AG04449 (cell line): ENCODE measurements at regions of chr10 and their contacts with region 1.

Region 1: DNA sequence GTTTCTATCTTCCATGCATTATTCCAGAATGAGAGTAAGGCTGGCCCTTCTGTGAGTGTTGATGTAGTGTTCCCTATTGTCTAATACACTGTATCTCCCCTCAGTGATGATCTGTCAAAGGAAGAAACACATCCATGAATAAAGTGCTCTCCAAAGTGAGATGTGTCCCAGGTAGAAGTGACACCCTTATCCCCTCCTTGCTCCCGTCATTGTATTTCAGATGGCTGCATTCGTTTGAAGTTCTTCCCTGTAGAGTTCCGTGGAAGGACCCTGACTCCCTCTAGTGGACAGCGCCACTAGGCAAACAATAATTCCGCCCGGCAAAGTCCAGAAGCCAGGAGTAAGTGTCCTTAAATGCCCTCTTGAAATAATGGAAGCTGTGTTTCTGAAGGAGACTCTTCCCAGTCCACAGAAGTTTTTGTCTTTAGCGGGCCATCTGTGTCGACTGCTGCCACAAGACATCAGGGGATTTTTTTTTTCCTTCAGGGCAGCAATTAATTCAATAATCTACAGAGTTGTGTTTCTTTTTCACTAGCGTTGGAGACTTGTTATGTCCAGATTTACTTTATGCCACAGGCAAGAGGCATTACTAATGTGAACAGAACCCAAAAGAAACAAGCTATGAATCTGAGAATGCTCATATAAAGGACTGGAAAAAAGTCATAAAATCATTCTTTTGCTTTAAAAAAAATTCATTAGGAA is 64.6 kb downstream of the THNSL1 start:
- DNase-seq: peak; percentile 54
- H3K4me3 ChIP-seq: no peak overlapping the region; the same call in 1 of the 2 replicates
- CTCF ChIP-seq: peak; percentile 81

Region 2: GRCh38 chr10:25016376-25017154 is 64.5 kb before region 1 on chr10 and contains the start of gene THNSL1:
- CTCF ChIA-PET with region 1: interaction called, 13 read pairs
- POLR2A ChIA-PET with region 1: no interaction called
- DNase-seq: peak; percentile 86
- H3K4me3 ChIP-seq: peak within 1 kb of the TSS; percentile 68
- CTCF ChIP-seq: no peak

Region 3: DNA sequence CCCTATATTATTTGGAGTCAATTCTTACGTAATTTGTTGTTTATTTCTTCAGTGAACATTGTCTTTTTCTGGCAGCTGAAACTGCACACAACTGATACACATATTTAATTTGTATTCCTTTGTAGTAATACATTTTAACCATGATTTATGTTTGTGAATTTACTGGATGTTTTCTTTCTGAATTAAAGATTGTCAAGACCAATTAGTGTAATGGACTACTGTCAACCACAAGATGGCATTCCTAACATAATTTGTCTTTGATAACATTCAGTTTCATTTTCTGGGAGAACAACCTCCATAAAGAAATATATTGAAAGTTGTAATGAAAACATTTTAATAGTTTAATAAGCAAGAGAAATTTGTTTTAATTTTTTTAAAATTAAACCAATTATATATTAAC is 54.6 kb before region 1 on chr10:
- CTCF ChIA-PET with region 1: interaction called, 28 read pairs
- POLR2A ChIA-PET with region 1: no interaction called
- DNase-seq: no peak
- H3K4me3 ChIP-seq: no peak overlapping the region
- CTCF ChIP-seq: no peak

Region 4: GRCh38 chr10:25068152-25069058 is 12.6 kb before region 1 on chr10:
- CTCF ChIA-PET with region 1: interaction called, 78 read pairs
- POLR2A ChIA-PET with region 1: no interaction called
- DNase-seq: no peak
- H3K4me3 ChIP-seq: no peak overlapping the region
- CTCF ChIP-seq: no peak

Region 5: GRCh38 chr10:25113191-25114035 is 32.4 kb after region 1 on chr10:
- CTCF ChIA-PET with region 1: interaction called, 14 read pairs
- POLR2A ChIA-PET with region 1: no interaction called
- DNase-seq: no peak
- H3K4me3 ChIP-seq: no peak overlapping the region
- CTCF ChIP-seq: peak; percentile 79